K562 (cell line): ENCODE measurements at regions of chr12 and their contacts with region 1.

Region 1: DNA sequence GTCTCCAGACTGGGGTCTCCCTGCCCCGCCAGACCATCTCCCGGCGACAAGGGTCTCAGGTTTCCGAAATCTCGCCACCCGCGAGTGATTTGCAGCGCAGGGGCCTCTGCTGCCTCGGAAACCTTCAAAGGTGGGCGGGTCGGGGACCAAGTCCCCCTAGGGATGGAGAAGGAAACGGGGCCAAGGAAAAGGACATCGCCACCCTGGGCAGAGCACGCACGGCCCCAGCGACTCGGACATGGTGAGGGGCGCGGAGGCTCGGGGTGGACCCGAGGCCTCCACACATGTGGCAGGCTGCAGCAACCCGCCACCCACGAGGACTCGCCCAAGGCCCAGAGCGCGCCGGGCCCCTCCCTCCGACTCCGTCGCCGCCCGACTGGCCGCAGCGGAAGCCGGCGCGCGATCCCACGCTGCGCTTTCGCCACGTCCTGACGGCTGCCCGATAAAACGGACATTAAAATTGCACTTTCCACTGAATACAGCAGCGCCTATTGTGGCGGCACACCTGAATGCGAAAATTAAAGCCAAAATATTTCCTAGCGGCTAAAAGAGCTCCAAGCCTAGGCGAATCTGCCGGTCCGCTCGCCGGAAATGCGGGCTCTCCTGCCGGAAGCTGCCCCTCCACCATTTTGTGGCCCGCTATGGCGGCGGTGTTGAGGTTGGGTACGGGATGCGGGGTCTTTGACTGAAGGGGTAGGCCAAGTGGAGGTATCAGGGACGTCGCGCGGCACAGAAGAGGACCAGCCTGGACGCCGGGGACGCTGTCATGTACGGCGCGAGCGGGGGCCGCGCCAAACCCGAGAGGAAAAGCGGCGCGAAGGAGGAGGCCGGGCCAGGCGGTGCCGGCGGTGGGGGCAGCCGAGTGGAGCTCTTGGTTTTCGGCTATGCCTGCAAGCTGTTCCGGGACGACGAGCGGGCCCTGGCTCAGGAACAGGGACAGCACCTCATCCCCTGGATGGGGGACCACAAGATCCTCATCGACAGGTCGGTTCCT is at the start of gene SFSWAP:
- DNase-seq: peak; percentile 81 to 86 (median 84)
- ATAC-seq: peak; percentile 98
- H3K4me3 ChIP-seq: peak within 1 kb of the TSS; percentile 97
- H3K27ac ChIP-seq: peak within 1 kb of the TSS; percentile 99
- H3K4me1 ChIP-seq: peaks cover 11 to 15% of the 10 kb centered on the region in 2 experiments; a peak in 4 of 5 replicates
- H3K27me3 ChIP-seq: no peaks in the 10 kb centered on the region
- CTCF ChIP-seq: no peak
- EP300 ChIP-seq: peak; percentile 100
- POLR2A ChIP-seq: peak; percentile 90
- RAD21 ChIP-seq: no peak
- polyA plus RNA-seq, gene SFSWAP: 2.4 to 2.8 TPM

Region 2: DNA sequence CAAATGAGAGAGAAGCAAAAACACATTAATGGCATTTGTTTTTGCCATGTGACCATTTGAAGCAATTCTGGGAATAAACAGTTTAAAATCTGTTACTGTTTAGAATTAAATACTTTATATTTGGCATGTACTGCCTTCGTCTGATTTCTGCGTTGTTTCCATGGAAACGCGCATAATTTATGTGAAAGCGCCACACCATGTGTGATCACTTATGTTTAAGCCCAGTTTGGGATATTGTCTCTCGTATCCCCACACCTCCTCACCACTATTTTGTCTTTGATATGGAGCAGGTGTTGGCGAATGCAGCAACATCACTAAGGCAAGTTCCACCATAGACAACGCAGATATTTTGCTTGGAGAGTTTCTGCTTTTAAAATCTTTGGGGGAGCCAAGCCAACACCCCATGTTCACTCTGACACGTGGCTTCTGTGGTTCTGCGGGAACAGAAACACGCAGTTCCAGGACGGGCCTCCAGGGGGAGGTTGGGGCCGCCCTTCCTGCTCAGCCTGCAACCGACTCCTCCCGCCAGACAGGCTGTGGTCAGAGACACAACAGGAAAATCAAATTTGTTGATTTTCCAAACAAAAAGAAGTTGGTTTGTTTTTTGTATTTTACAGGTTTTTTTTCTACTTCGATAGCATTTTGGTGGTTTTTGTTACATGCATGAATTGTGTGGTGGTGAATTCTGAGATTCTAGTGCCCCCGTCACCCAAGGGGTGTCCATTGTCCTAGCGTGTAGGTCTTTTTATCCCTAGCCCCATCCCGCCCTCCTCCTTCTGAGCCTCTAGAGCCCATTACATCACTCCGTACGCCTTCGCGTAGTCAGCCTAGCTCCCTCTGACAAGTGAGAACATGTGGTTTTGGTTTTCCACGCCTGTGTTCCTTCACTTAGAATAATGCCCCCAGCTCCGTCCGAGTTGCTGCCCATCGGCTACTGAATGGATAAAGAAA is 101.7 kb before region 1 on chr12:
- CTCF ChIA-PET with region 1: no interaction called
- POLR2A ChIA-PET with region 1: no interaction called
- in situ Hi-C with region 1: no loop called
- intact Hi-C with region 1: loop called (anchors 10 kb)
- DNase-seq: peak; percentile 78 to 86 (median 82)
- ATAC-seq: peak; percentile 88
- H3K4me3 ChIP-seq: no peak overlapping the region
- H3K27ac ChIP-seq: no peak overlapping the region
- H3K4me1 ChIP-seq: peaks cover 20 to 22% of the 10 kb centered on the region in 2 experiments
- H3K27me3 ChIP-seq: peaks cover 4 to 42% of the 10 kb centered on the region in 2 experiments; a peak in 3 of 5 replicates
- CTCF ChIP-seq: peak; percentile 79 to 91 (median 86)
- EP300 ChIP-seq: no peak
- POLR2A ChIP-seq: no peak
- RAD21 ChIP-seq: peak; percentile 65 to 80

Region 3: GRCh38 chr12:131673888-131674257 is 36.9 kb before region 1 on chr12:
- CTCF ChIA-PET with region 1: no interaction called
- POLR2A ChIA-PET with region 1: no interaction called
- in situ Hi-C with region 1: no loop called
- intact Hi-C with region 1: no loop called
- DNase-seq: no peak
- ATAC-seq: no peak
- H3K4me3 ChIP-seq: no peak overlapping the region
- H3K27ac ChIP-seq: no peak overlapping the region
- H3K4me1 ChIP-seq: peaks cover 0 to 10% of the 10 kb centered on the region in 2 experiments; a peak in 1 of 5 replicates
- H3K27me3 ChIP-seq: peaks cover 27 to 48% of the 10 kb centered on the region in 2 experiments
- CTCF ChIP-seq: no peak
- EP300 ChIP-seq: no peak
- POLR2A ChIP-seq: no peak
- RAD21 ChIP-seq: no peak

Region 4: DNA sequence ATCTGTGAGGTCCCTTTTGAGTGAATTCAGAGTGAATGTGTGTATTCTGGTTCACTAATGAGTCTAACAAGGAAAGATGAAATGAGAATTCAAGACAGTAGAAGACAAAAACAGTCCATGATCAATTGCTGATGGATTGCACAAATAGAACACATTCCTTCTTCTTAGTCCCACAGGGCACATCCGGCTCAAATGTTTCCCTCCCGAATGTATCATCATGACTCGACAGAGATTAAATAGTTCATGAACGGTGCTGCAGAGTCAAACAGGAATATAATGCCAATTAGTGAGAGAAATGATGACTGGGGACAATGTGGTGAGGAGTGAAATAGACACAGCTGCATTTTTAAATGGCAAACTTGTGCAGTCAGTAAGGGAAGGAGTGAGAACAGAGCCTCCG is 11.3 kb before region 1 on chr12:
- CTCF ChIA-PET with region 1: no interaction called
- POLR2A ChIA-PET with region 1: interaction called, 6 read pairs
- in situ Hi-C with region 1: no loop called
- intact Hi-C with region 1: loop called (anchors 1 kb)
- DNase-seq: no peak
- ATAC-seq: no peak; the same call in 2 of the 3 replicates
- H3K4me3 ChIP-seq: no peak overlapping the region
- H3K27ac ChIP-seq: no peak overlapping the region
- H3K4me1 ChIP-seq: peaks cover 0 to 4% of the 10 kb centered on the region in 2 experiments; a peak in 2 of 5 replicates
- H3K27me3 ChIP-seq: peaks cover 15 to 34% of the 10 kb centered on the region in 2 experiments; a peak in 4 of 5 replicates
- CTCF ChIP-seq: no peak
- EP300 ChIP-seq: no peak
- POLR2A ChIP-seq: no peak
- RAD21 ChIP-seq: no peak

Region 5: GRCh38 chr12:131803995-131804521 is 93.3 kb after region 1 on chr12:
- CTCF ChIA-PET with region 1: no interaction called
- POLR2A ChIA-PET with region 1: no interaction called
- in situ Hi-C with region 1: no loop called
- intact Hi-C with region 1: no loop called
- DNase-seq: no peak
- ATAC-seq: peak; percentile 41; the same call in 2 of the 3 replicates
- H3K4me3 ChIP-seq: no peak overlapping the region
- H3K27ac ChIP-seq: no peak overlapping the region
- H3K4me1 ChIP-seq: peaks cover 3 to 12% of the 10 kb centered on the region in 2 experiments; a peak in 4 of 5 replicates
- H3K27me3 ChIP-seq: no peaks in the 10 kb centered on the region
- CTCF ChIP-seq: no peak
- EP300 ChIP-seq: no peak
- POLR2A ChIP-seq: no peak
- RAD21 ChIP-seq: no peak